A549 (cell line): ENCODE measurements at regions of chr1 and their contacts with region 1.

Region 1: DNA sequence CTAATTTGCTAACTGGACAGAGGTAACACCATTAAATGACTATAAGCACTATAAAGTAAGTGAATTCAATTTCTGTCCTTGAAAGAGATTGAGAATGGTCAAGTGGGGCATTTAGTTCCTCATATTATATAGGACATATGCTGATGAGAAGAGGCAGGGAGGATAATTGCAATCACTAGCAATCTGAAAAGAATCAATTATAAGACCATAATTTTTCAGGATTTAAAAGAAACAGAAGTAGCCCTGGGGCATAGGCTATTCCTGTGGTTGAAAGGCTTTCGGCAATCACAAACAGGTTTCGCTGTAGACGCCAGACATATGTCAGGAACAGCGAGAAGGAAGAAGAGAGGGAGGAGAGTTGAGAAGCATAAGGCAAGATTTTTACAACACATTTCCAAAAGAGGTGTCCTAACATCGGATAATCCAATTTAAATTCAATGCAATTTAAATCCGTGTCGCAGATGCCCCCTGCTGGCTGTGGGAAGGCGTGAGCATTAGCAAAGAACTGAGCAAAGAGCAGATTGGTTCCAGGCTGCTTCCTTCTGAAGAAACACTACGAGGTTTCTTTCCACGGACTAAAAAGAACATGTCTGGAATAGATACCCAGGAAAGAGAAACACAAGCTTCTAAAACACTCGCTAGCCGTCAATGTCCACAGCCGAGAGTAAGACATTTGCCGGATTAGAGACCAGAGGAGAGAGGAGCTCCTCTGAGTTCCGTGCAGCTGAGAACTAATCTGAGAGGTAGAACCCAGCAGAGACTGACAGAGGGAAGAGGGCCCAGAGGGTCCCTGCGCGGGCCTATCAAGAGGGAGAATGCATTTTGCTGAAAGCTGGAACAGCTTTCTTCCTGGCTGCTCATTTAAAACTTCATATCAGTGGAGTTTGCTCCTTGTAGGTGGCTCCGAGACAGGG is 27.9 kb downstream of the RGS5 start:
- DNase-seq: peak; percentile 26 to 48
- ATAC-seq: peak; percentile 86 to 91
- H3K4me3 ChIP-seq: no peak overlapping the region
- H3K27ac ChIP-seq: no peak overlapping the region
- H3K4me1 ChIP-seq: peaks cover 4% of the 10 kb centered on the region; the same call in 1 of the 3 replicates
- CTCF ChIP-seq: peak; percentile 86
- EP300 ChIP-seq: no peak
- POLR2A ChIP-seq: no peak
- RAD21 ChIP-seq: peak; percentile 74 to 77

Region 2: GRCh38 chr1:162847839-162848453 is 326.8 kb before region 1 on chr1:
- CTCF ChIA-PET with region 1: interaction called, 26 read pairs
- POLR2A ChIA-PET with region 1: no interaction called
- DNase-seq: peak; percentile 30 to 76
- ATAC-seq: peak in 1 of 2 experiments; percentile 76; a peak in 3 of 6 replicates
- H3K4me3 ChIP-seq: no peak overlapping the region
- H3K27ac ChIP-seq: no peak overlapping the region
- H3K4me1 ChIP-seq: no peaks in the 10 kb centered on the region
- CTCF ChIP-seq: peak; percentile 90
- EP300 ChIP-seq: no peak
- POLR2A ChIP-seq: no peak
- RAD21 ChIP-seq: peak; percentile 77 to 83

Region 3: GRCh38 chr1:162854245-162854882 is 320.4 kb before region 1 on chr1:
- CTCF ChIA-PET with region 1: interaction called, 26 read pairs
- POLR2A ChIA-PET with region 1: no interaction called
- DNase-seq: peak; percentile 67 to 68
- ATAC-seq: peak; percentile 89 to 98
- H3K4me3 ChIP-seq: no peak overlapping the region
- H3K27ac ChIP-seq: no peak overlapping the region
- H3K4me1 ChIP-seq: no peaks in the 10 kb centered on the region
- CTCF ChIP-seq: peak; percentile 78
- EP300 ChIP-seq: no peak
- POLR2A ChIP-seq: no peak
- RAD21 ChIP-seq: peak; percentile 64 to 66

Region 4: GRCh38 chr1:162861101-162861500 is 313.7 kb before region 1 on chr1 and contains the start of gene CCDC190:
- CTCF ChIA-PET with region 1: interaction called, 10 read pairs
- POLR2A ChIA-PET with region 1: no interaction called
- DNase-seq: no peak
- ATAC-seq: no peak; a peak in 1 of 6 replicates
- H3K4me3 ChIP-seq: no peak within 1 kb of the TSS
- H3K27ac ChIP-seq: no peak within 1 kb of the TSS
- H3K4me1 ChIP-seq: no peaks in the 10 kb centered on the region
- CTCF ChIP-seq: no peak
- EP300 ChIP-seq: no peak
- POLR2A ChIP-seq: no peak
- RAD21 ChIP-seq: no peak
- polyA plus RNA-seq, gene CCDC190: not detected in 2 replicates

Region 5: DNA sequence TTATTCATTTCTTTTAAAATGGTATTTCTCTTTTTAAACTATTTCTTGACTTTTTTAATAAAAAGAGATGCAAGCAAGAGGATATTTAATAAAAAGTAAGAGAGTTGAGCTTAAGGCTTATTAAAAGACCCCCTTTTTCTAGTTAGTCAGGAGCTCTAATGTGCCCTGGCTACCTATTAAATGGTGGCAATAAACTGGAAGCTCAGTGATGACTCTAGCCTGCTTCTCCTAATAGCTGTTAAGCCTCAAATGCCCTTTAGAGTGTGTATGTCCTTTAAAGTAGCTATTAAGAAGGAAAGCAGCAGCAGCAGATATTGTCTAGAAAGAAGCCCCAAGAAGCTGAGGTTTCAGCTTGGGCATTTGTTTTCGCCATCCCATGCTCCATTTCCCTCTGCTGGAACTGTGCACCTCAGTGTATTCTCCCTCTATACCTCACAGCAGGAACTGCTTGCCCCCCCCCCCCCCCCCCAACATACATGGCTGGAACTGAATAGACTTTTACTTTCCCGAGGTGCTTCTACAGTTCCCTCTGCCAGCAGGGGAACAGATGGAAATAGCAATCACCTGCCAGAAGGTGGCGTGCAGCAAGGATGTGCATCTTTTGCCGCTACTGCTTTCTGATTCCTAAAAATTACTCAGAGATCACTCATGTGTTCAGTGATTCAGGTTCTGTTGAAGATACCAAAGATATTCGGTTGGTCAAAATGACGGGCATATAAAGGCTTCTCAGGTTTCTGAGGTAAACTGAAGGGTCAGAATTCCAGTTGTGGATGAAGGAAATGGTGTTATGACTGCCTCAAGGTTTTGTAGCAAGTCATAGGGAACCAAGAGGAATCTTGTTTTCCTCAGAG is 103.2 kb before region 1 on chr1:
- CTCF ChIA-PET with region 1: interaction called, 10 read pairs
- POLR2A ChIA-PET with region 1: no interaction called
- DNase-seq: peak; percentile 46 to 56
- ATAC-seq: peak; percentile 87 to 94
- H3K4me3 ChIP-seq: no peak overlapping the region
- H3K27ac ChIP-seq: no peak overlapping the region
- H3K4me1 ChIP-seq: no peaks in the 10 kb centered on the region
- CTCF ChIP-seq: peak; percentile 52
- EP300 ChIP-seq: no peak
- POLR2A ChIP-seq: no peak
- RAD21 ChIP-seq: peak; percentile 49 to 50; a peak in 4 of 5 replicates

Region 6: GRCh38 chr1:163202833-163203451 is 28.2 kb after region 1 on chr1 and contains the start of gene RGS5:
- CTCF ChIA-PET with region 1: interaction called, 10 read pairs
- POLR2A ChIA-PET with region 1: no interaction called
- DNase-seq: no peak
- ATAC-seq: peak; percentile 24 to 38; a peak in 3 of 6 replicates
- H3K4me3 ChIP-seq: no peak within 1 kb of the TSS
- H3K27ac ChIP-seq: no peak within 1 kb of the TSS
- H3K4me1 ChIP-seq: no peaks in the 10 kb centered on the region
- CTCF ChIP-seq: no peak
- EP300 ChIP-seq: no peak
- POLR2A ChIP-seq: no peak
- RAD21 ChIP-seq: no peak
- polyA plus RNA-seq, gene RGS5: 6.5 TPM in 2 replicates